ENCODE measurements at regions of chr19 and their contacts with region 1.

Region 1: DNA sequence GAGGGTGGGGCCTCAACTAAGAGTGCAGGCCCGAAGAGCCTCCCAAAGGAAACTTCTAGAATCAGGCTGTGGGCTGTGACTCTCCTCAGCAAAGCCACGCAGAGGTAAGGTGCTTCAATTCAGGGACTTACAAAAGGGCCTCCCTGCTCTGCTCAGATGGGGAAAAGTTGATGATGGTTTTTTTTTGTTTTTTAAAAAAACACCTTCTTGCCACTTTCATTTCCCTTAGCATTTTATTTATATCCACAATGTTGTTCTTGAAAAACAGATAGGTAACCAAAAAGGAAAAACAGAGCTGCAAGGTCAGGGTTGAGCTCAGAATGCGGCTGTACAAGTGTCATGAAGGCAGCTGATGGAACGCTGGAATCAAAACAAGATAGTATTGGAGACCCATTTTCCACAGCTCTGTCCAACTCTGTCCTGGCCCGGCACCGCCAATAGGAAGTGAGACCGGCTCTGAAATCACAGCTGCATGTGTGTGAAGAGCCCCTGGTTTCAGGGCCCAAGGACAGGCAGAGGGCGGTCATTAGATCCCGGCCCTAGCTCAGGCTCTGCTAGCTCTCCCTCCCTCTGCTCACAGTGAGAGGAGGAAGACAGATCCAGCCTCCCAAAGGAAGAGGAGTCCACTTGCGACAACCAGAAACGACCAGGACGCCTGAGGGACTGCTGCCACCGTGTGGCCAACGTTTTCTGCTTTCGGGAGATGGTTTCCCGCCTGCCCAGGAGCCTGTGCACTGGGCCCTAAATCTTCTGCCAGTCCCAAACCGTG is 58.3 kb downstream of the KLF2 start:
- DNase-seq: peak; percentile 94

Region 2: GRCh38 chr19:16197622-16198369 is 185.2 kb before region 1 on chr19 and contains the start of gene AP1M1:
- intact Hi-C with region 1: loop called (anchors 5 kb)
- DNase-seq: peak; percentile 99
- total RNA-seq, gene AP1M1: 51.8 TPM

Region 3: GRCh38 chr19:16330368-16330801 is 52.6 kb before region 1 on chr19:
- intact Hi-C with region 1: loop called (anchors 1 kb)
- DNase-seq: peak; percentile 93